Dendritic cell treated with granulocyte-macrophage colony-stimulating factor and Interleukin-4, amounts not matched to agents 40 ng/mL and 50 ng/mL, for 4 days (primary cell): ENCODE measurements at regions of chr14 and their contacts with region 1.

Region 1: GRCh38 chr14:74109369-74109768 is 24.6 kb downstream of the LIN52 start:
- H3K4me3 Mint-ChIP-seq: no peak overlapping the region
- H3K27ac Mint-ChIP-seq: no peak overlapping the region
- H3K4me1 Mint-ChIP-seq: no peaks in the 10 kb centered on the region
- H3K27me3 Mint-ChIP-seq: no peaks in the 10 kb centered on the region

Region 2: GRCh38 chr14:74249433-74250375 is 140.3 kb after region 1 on chr14:
- intact Hi-C with region 1: loop called (anchors 1 kb)
- H3K4me3 Mint-ChIP-seq: no peak overlapping the region
- H3K27ac Mint-ChIP-seq: no peak overlapping the region
- H3K4me1 Mint-ChIP-seq: peaks cover 9% of the 10 kb centered on the region
- H3K27me3 Mint-ChIP-seq: peaks cover 58% of the 10 kb centered on the region

Region 3: DNA sequence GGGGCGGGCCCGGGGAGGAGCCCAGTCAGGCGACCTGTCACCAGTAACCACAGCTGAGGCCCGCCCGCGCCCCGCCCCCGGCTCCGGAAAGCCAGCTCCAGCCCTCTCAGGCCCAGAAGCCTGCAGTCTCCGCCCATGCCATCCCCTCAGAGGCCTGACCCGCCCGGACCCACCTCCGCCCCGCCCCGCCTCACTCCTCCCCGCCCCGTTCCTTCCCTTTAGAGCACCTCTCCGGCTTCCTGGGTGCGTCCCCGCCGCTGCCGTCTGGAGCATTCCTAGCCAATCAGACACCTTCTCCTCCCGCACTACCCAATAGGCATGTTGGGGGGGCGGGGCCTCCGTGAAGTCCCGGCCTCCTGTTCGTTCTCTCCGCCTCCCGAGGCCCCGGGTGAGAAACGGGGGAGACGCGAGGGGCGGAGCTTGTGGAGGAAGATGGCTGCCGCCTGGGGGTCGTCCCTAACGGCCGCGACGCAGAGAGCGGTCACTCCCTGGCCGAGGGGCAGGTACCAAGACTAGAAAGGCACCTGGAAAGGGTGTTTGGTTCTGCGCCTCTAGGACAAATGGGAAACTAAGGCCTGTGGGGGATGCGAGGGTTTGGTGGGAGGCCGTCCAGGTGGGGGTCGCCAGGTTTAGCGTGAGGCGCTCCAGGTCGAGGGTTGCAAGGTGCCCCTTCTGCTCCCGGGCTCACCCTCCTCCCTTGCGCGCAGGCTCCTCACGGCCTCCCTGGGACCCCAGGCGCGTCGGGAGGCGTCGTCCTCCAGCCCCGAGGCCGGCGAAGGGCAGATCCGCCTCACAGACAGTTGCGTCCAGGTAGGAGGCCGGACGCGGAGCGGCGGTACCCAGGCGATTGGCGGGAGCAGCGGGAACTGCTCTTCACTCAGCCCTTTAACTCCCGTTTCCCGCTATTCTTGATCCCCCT is 384.2 kb after region 1 on chr14 and contains the start of gene ISCA2:
- intact Hi-C with region 1: no loop called
- H3K4me3 Mint-ChIP-seq: no peak within 1 kb of the TSS
- H3K27ac Mint-ChIP-seq: no peak within 1 kb of the TSS
- H3K4me1 Mint-ChIP-seq: peaks cover 33% of the 10 kb centered on the region
- H3K27me3 Mint-ChIP-seq: no peaks in the 10 kb centered on the region